Motor neuron (in vitro differentiated cells): ENCODE measurements at regions of chr11 and their contacts with region 1.

Region 1: GRCh38 chr11:120952461-120953434 is 71.2 kb upstream of the TBCEL start:
- ATAC-seq: peak; percentile 59 to 87 (median 80)
- H3K4me3 ChIP-seq: no peak overlapping the region
- H3K27ac ChIP-seq: no peak overlapping the region
- H3K4me1 ChIP-seq: peaks cover 20 to 40% of the 10 kb centered on the region in 2 donors

Region 2: GRCh38 chr11:120197251-120197891 is 755.4 kb before region 1 on chr11:
- in situ Hi-C with region 1: no loop called
- ATAC-seq: peak in 7 of 8 experiments; percentile 9 to 93 (median 31)
- H3K4me3 ChIP-seq: no peak overlapping the region
- H3K27ac ChIP-seq: peak overlapping the region in 1 of 2 donors; percentile 40
- H3K4me1 ChIP-seq: peaks cover 36 to 39% of the 10 kb centered on the region in 2 donors

Region 3: DNA sequence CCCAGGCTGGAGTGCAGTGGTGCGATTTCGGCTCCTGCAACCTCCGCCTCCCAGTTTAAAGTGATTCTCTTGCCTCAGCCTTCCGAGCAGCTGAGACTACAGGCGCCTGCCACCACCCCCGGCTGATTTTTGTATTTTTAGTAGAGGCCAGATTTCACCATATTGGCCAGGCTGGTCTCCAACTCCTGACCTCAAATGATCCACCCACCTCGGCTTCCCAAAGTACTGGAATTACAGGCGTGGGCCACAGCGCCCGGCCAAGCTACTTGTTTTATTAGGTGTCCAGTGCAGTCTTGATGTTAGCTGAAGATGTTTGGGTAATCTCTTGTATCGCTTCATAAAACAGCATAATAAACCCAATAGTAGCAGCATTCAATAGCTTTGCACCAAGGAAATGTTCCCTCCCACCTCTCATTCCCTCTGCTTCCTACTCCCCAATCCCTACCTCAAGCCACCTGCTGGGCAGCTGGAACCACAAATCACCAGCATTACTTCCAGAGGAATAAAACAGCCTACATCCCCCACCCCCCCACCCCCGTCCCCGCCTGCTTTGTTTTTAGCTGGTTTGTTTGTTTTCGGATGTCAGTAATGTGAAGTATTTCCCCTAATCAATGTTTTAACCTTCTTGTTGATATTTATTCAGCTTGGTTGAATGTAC is 452.2 kb before region 1 on chr11:
- in situ Hi-C with region 1: loop called in 5 of 9 experiments (anchors 10 to 25 kb)
- ATAC-seq: peak in 3 of 8 experiments; percentile 16 to 60 (median 57)
- H3K4me3 ChIP-seq: no peak overlapping the region
- H3K27ac ChIP-seq: no peak overlapping the region
- H3K4me1 ChIP-seq: peaks cover 0 to 14% of the 10 kb centered on the region in 2 donors

Region 4: DNA sequence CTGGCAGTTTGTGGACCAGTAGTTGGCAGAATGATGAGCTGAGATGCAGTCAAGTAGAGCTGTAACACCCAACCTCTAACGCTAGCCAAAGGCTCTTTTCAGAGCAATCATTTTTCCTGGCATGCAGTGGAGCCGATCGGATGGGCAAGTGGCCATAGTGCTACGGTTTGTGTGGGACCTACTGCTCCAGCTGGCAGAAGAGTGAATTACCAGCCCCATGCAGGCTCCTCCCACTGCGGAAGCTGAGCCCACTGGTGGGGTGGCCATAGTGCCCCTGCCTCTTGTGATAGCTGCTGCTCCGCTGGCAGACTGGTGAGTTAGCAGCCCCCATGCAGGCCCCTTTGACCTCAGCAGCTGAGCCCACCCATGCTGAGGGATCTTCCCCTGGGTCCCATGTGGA is 312.8 kb after region 1 on chr11:
- in situ Hi-C with region 1: no loop called
- ATAC-seq: no peak
- H3K4me3 ChIP-seq: no peak overlapping the region
- H3K27ac ChIP-seq: no peak overlapping the region
- H3K4me1 ChIP-seq: peaks cover 0 to 21% of the 10 kb centered on the region in 2 donors

Region 5: GRCh38 chr11:121482231-121483129 is 529.7 kb after region 1 on chr11:
- in situ Hi-C with region 1: no loop called
- ATAC-seq: peak in 1 of 8 experiments; percentile 21
- H3K4me3 ChIP-seq: no peak overlapping the region
- H3K27ac ChIP-seq: no peak overlapping the region
- H3K4me1 ChIP-seq: peaks cover 3 to 20% of the 10 kb centered on the region in 2 donors

Region 6: GRCh38 chr11:122146475-122146874 is 1193.7 kb after region 1 on chr11:
- in situ Hi-C with region 1: no loop called
- ATAC-seq: no peak
- H3K4me3 ChIP-seq: no peak overlapping the region
- H3K27ac ChIP-seq: no peak overlapping the region
- H3K4me1 ChIP-seq: peaks cover 11 to 39% of the 10 kb centered on the region in 2 donors